ENCODE measurements at regions of chr1 and their contacts with region 1.

Region 1: GRCh38 chr1:203117611-203118575 is 9.6 kb upstream of the ADORA1 start:
- DNase-seq: peak; percentile 89
- ATAC-seq: peak; percentile 94

Region 2: DNA sequence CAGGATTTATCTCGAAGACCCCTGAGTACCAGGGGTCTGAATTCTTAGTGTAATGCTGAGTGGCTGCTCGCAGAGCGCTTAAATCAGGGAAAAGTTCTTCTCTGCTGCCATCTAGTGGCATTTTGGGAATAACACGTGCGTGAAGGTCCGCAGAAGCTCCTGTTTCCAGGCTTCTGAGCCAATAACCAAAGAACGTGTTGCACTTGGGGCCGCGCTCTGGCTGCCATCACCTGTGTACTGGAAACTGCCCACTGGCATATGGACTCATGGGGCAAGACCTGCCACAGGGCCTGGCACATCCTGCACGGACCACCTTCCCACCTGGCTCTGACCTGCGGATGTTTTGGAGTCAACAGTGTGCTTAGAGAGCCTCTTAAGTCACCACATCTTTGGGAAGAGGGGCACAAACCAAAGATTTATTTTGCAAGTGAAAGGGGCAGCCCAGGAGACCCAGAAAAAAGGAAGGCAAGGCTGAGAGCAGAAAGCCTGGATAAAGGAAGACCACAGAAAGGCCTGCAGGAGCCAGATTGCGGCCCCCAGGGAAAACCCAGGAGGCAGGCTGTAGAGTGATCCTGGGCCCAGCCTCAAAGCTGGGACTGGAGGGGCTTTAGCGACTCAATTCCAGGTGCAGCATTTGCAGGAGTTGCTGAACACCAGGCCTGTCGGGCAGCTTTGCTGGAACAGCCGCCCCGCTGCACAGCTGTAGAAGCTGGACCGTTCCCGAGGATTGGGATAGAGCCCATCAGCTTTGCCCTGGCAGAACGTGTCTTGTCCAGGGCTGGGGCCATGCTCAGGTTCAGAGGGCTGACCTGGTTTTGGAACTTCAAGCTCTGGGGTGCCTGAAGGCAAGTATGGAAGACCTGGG is 98.6 kb after region 1 on chr1:
- intact Hi-C with region 1: loop called (anchors 2 kb)
- DNase-seq: no peak
- ATAC-seq: peak; percentile 63